H1 (cell line): ENCODE measurements at regions of chr1 and their contacts with region 1.

Region 1: GRCh38 chr1:45512641-45513054 is 9.0 kb downstream of the PRDX1 start:
- DNase-seq: peak in 1 of 2 experiments; percentile 68
- H3K4me3 ChIP-seq: no peak overlapping the region
- H3K27ac ChIP-seq: no peak overlapping the region
- H3K4me1 ChIP-seq: no peaks in the 10 kb centered on the region
- H3K27me3 ChIP-seq: no peaks in the 10 kb centered on the region
- CTCF ChIP-seq: peak; percentile 75 to 86 (median 80)
- EP300 ChIP-seq: no peak
- POLR2A ChIP-seq: 0 out of 3 replicates have a peak, but pooled peaks of 1 of the 2 experiments have one; percentile 22
- RAD21 ChIP-seq: peak; percentile 70 to 72

Region 2: DNA sequence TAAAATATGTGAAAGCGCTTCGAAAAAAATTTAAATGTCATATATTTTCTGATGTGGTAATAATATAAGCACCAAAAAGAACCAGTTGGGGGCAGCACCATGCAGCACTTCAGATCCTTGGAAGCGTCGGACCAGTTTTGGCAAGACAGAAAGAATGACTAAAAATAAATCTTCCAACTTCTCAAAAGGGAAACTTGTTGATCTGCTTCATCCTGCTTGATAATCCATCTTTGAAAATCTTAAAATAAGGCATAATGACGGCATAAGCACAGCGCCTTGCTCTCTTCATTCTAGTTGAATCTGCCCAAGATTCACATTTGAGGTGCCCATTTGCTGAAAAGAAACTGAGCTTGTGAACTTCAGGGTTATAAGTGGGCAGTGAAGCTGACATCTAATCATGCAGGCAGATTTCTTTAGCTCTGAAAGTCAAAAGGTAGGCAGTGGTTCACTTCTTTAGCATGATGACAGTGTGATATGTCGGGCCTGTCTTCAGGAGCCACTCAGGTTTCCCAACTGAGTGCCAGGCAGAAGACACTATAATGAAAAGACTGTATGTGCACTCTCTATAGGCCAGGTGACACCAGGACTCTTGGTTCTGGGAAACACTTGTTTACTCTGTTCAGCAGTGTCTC is 152.7 kb before region 1 on chr1:
- CTCF ChIA-PET with region 1: interaction called, 10 read pairs
- POLR2A ChIA-PET with region 1: interaction called, 5 read pairs
- DNase-seq: no peak
- H3K4me3 ChIP-seq: no peak overlapping the region
- H3K27ac ChIP-seq: no peak overlapping the region
- H3K4me1 ChIP-seq: peaks cover 2 to 11% (median 8%) of the 10 kb centered on the region in 4 experiments
- H3K27me3 ChIP-seq: no peaks in the 10 kb centered on the region
- CTCF ChIP-seq: peak; percentile 18 to 61 (median 46)
- EP300 ChIP-seq: no peak
- POLR2A ChIP-seq: no peak
- RAD21 ChIP-seq: peak; percentile 78 to 83

Region 3: GRCh38 chr1:45381243-45381642 is 131.4 kb before region 1 on chr1:
- CTCF ChIA-PET with region 1: no interaction called
- POLR2A ChIA-PET with region 1: no interaction called
- DNase-seq: no peak
- H3K4me3 ChIP-seq: no peak overlapping the region
- H3K27ac ChIP-seq: 0 out of 2 replicates have a peak overlapping the region, but pooled peaks have one; percentile 15
- H3K4me1 ChIP-seq: no peaks in the 10 kb centered on the region
- H3K27me3 ChIP-seq: no peaks in the 10 kb centered on the region
- CTCF ChIP-seq: no peak
- EP300 ChIP-seq: no peak
- POLR2A ChIP-seq: no peak
- RAD21 ChIP-seq: no peak

Region 4: GRCh38 chr1:45470306-45470798 is 42.3 kb before region 1 on chr1:
- CTCF ChIA-PET with region 1: no interaction called
- POLR2A ChIA-PET with region 1: no interaction called
- DNase-seq: no peak
- H3K4me3 ChIP-seq: no peak overlapping the region
- H3K27ac ChIP-seq: no peak overlapping the region
- H3K4me1 ChIP-seq: no peaks in the 10 kb centered on the region
- H3K27me3 ChIP-seq: no peaks in the 10 kb centered on the region
- CTCF ChIP-seq: no peak
- EP300 ChIP-seq: no peak
- POLR2A ChIP-seq: no peak
- RAD21 ChIP-seq: no peak

Region 5: DNA sequence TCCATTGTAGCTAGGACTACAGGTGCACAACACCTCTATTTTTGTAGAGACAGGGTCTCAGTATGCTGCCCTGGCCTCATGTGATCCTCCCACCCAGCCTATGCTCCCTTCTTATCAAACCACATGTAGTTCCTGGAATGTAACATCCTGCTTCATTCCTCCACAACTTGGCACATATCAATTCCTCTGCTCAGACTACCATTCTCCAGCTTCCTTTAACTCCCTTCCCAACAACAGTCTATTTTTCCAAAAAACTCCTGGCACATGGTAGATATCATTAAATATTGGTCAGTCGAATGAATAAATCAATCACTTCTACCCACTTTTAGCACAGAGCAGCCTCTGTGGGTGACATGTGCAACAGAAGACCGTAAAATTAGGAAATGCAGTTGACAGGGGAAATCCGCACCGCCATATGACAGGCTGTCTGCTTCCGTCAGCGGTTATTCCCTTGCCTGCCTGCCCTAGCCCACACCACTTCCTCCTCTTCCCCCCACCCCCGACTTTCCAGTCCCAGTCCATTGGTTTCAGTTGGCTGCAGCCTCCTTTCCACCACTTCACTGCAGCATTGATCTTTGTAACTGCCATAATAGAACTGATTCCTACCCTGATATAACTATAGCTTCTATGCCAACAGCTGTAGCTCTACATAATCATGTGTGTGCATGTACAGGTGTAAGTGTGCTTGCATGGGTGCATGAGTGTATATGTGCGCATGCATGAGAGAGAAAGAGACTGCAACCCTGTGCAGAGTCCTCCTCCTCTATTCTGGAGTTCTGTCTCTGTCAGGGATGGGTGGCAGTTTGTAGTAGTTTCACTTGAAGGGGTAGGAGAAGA is 31.2 kb after region 1 on chr1:
- CTCF ChIA-PET with region 1: interaction called, 21 read pairs
- POLR2A ChIA-PET with region 1: interaction called, 741 read pairs
- DNase-seq: no peak
- H3K4me3 ChIP-seq: no peak overlapping the region
- H3K27ac ChIP-seq: no peak overlapping the region
- H3K4me1 ChIP-seq: peaks cover 0 to 5% (median 2%) of the 10 kb centered on the region in 4 experiments; a peak in 4 of 7 replicates
- H3K27me3 ChIP-seq: no peaks in the 10 kb centered on the region
- CTCF ChIP-seq: no peak
- EP300 ChIP-seq: no peak
- POLR2A ChIP-seq: no peak
- RAD21 ChIP-seq: no peak

Region 6: DNA sequence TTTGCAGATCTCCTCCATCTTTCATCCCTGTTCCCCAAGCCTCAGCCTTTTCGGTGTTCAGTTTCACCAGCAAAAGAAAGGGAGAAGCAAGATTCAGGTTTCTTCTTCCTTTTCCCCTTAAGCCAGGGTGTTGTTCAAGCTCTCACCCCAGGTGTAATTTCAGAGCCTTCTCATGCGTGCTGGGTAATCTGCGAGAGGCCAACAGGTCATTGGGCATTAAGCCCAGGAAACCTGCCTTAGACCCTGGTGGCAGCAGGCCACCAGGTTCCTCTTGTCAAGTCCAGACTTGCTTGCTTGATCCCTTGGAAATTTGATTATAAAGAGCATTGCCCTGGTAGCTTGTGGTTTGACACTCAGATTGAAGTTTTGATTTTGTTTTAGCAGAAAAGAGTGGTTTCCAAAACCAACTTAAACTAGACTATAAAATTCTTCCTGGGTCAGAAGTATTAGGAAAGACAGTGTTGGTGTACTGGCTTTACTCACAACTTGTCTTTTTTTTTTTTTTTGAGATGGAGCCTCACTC is 44.8 kb after region 1 on chr1:
- CTCF ChIA-PET with region 1: interaction called, 8 read pairs
- POLR2A ChIA-PET with region 1: interaction called, 741 read pairs
- DNase-seq: no peak
- H3K4me3 ChIP-seq: no peak overlapping the region
- H3K27ac ChIP-seq: peak overlapping the region; percentile 19; the same call in 1 of the 2 replicates
- H3K4me1 ChIP-seq: peaks cover 0 to 1% (median 0%) of the 10 kb centered on the region in 4 experiments; a peak in 3 of 7 replicates
- H3K27me3 ChIP-seq: no peaks in the 10 kb centered on the region
- CTCF ChIP-seq: no peak
- EP300 ChIP-seq: no peak
- POLR2A ChIP-seq: no peak
- RAD21 ChIP-seq: no peak

Region 7: GRCh38 chr1:45722809-45723208 is 210.2 kb after region 1 on chr1:
- CTCF ChIA-PET with region 1: no interaction called
- POLR2A ChIA-PET with region 1: no interaction called
- DNase-seq: no peak
- H3K4me3 ChIP-seq: no peak overlapping the region
- H3K27ac ChIP-seq: no peak overlapping the region
- H3K4me1 ChIP-seq: no peaks in the 10 kb centered on the region
- H3K27me3 ChIP-seq: no peaks in the 10 kb centered on the region
- CTCF ChIP-seq: no peak
- EP300 ChIP-seq: no peak
- POLR2A ChIP-seq: no peak
- RAD21 ChIP-seq: no peak